Caco-2 (cell line): ENCODE measurements at regions of chrX and their contacts with region 1.

Region 1: GRCh38 chrX:33014086-33014485 is 197.3 kb downstream of the DMD start:
- DNase-seq: no peak
- H3K4me3 ChIP-seq: no peak overlapping the region
- H3K4me3 Mint-ChIP-seq: no peak overlapping the region
- H3K27ac Mint-ChIP-seq: no peak overlapping the region
- H3K4me1 ChIP-seq: peaks cover 16% of the 10 kb centered on the region
- H3K4me1 Mint-ChIP-seq: peaks cover 6% of the 10 kb centered on the region
- H3K27me3 ChIP-seq: no peaks in the 10 kb centered on the region
- H3K27me3 Mint-ChIP-seq: no peaks in the 10 kb centered on the region
- CTCF ChIP-seq: no peak

Region 2: GRCh38 chrX:32538554-32538953 is 475.5 kb before region 1 on chrX:
- CTCF ChIA-PET with region 1: no interaction called
- POLR2A ChIA-PET with region 1: no interaction called
- intact Hi-C with region 1: loop called (anchors 5 kb)
- DNase-seq: no peak
- H3K4me3 ChIP-seq: no peak overlapping the region
- H3K4me3 Mint-ChIP-seq: no peak overlapping the region
- H3K27ac Mint-ChIP-seq: peak overlapping the region; percentile 74
- H3K4me1 ChIP-seq: peaks cover 30% of the 10 kb centered on the region
- H3K4me1 Mint-ChIP-seq: peaks cover 40% of the 10 kb centered on the region
- H3K27me3 ChIP-seq: no peaks in the 10 kb centered on the region
- H3K27me3 Mint-ChIP-seq: no peaks in the 10 kb centered on the region
- CTCF ChIP-seq: no peak

Region 3: GRCh38 chrX:32571579-32571978 is 442.5 kb before region 1 on chrX:
- CTCF ChIA-PET with region 1: no interaction called
- POLR2A ChIA-PET with region 1: no interaction called
- intact Hi-C with region 1: loop called (anchors 1 kb)
- DNase-seq: peak in 1 of 2 experiments; percentile 22
- H3K4me3 ChIP-seq: no peak overlapping the region
- H3K4me3 Mint-ChIP-seq: peak overlapping the region; percentile 2
- H3K27ac Mint-ChIP-seq: peak overlapping the region; percentile 3
- H3K4me1 ChIP-seq: peaks cover 38% of the 10 kb centered on the region
- H3K4me1 Mint-ChIP-seq: peaks cover 2% of the 10 kb centered on the region
- H3K27me3 ChIP-seq: no peaks in the 10 kb centered on the region
- H3K27me3 Mint-ChIP-seq: no peaks in the 10 kb centered on the region
- CTCF ChIP-seq: no peak

Region 4: DNA sequence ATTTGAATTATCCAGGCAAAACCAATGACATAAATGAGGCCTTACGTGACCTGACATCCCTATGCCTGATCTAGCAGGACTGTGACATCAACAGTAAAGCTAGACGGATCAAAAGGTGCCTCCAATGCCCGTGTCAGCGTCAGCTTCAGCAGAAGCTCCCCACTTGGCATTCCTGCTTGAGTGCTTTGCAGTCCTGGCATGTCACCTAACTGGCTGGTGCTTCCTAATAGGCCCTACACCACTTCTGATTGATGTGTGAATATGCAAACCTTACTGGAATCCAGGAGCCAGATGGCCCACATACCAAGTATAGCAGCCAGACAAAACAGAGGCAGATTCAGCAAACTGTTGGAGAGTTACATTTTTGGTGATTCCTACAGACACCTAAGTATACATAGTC is 26.9 kb before region 1 on chrX:
- CTCF ChIA-PET with region 1: no interaction called
- POLR2A ChIA-PET with region 1: no interaction called
- intact Hi-C with region 1: no loop called
- DNase-seq: peak; percentile 9 to 37
- H3K4me3 ChIP-seq: no peak overlapping the region
- H3K4me3 Mint-ChIP-seq: no peak overlapping the region
- H3K27ac Mint-ChIP-seq: no peak overlapping the region
- H3K4me1 ChIP-seq: no peaks in the 10 kb centered on the region
- H3K4me1 Mint-ChIP-seq: no peaks in the 10 kb centered on the region
- H3K27me3 ChIP-seq: no peaks in the 10 kb centered on the region
- H3K27me3 Mint-ChIP-seq: no peaks in the 10 kb centered on the region
- CTCF ChIP-seq: no peak

Region 5: DNA sequence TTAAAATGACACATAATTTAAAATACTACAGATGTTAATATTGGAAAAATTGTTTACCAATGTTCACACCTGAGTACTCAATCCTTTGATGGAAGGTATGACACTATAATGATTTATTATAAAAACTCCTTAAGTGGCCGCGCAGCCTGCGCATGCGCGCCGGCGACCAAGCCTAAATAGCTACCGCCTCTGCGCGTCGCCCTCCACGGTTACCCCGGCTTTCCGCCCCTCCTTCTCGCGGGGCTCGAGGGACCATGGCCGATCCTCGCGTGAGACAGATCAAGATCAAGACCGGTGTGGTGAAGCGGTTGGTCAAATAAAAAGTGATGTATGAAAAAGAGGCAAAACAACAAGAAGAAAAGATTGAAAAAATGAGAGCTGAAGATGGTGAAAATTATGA is 27.1 kb after region 1 on chrX:
- CTCF ChIA-PET with region 1: no interaction called
- POLR2A ChIA-PET with region 1: no interaction called
- intact Hi-C with region 1: loop called (anchors 1 kb)
- DNase-seq: no peak
- H3K4me3 ChIP-seq: no peak overlapping the region
- H3K4me3 Mint-ChIP-seq: no peak overlapping the region
- H3K27ac Mint-ChIP-seq: no peak overlapping the region
- H3K4me1 ChIP-seq: no peaks in the 10 kb centered on the region
- H3K4me1 Mint-ChIP-seq: peaks cover 5% of the 10 kb centered on the region
- H3K27me3 ChIP-seq: no peaks in the 10 kb centered on the region
- H3K27me3 Mint-ChIP-seq: no peaks in the 10 kb centered on the region
- CTCF ChIP-seq: no peak